ENCODE measurements at regions of chr9 and their contacts with region 1.

Region 1: GRCh38 chr9:93108291-93109041 is 12.4 kb downstream of the CARD19 start:
- DNase-seq: no peak
- H3K4me3 ChIP-seq: no peak overlapping the region
- H3K27ac ChIP-seq: no peak overlapping the region
- H3K27me3 ChIP-seq: no peaks in the 10 kb centered on the region
- CTCF ChIP-seq: no peak

Region 2: GRCh38 chr9:93003552-93004407 is 104.7 kb before region 1 on chr9:
- CTCF ChIA-PET with region 1: interaction called, 17 read pairs
- POLR2A ChIA-PET with region 1: no interaction called
- DNase-seq: peak; percentile 1
- H3K4me3 ChIP-seq: no peak overlapping the region
- H3K27ac ChIP-seq: no peak overlapping the region
- H3K27me3 ChIP-seq: no peaks in the 10 kb centered on the region
- CTCF ChIP-seq: peak; percentile 69

Region 3: GRCh38 chr9:93098236-93098946 is 10.1 kb before region 1 on chr9:
- CTCF ChIA-PET with region 1: interaction called, 21 read pairs
- POLR2A ChIA-PET with region 1: no interaction called
- DNase-seq: peak; percentile 91
- H3K4me3 ChIP-seq: peak overlapping the region; percentile 83
- H3K27ac ChIP-seq: peak overlapping the region; percentile 94
- H3K27me3 ChIP-seq: no peaks in the 10 kb centered on the region
- CTCF ChIP-seq: no peak

Region 4: GRCh38 chr9:93119953-93120845 is 11.7 kb after region 1 on chr9:
- CTCF ChIA-PET with region 1: interaction called, 53 read pairs
- POLR2A ChIA-PET with region 1: no interaction called
- DNase-seq: peak; percentile 85
- H3K4me3 ChIP-seq: no peak overlapping the region
- H3K27ac ChIP-seq: peak overlapping the region; percentile 42
- H3K27me3 ChIP-seq: no peaks in the 10 kb centered on the region
- CTCF ChIP-seq: peak; percentile 56

Region 5: GRCh38 chr9:93134015-93134739 is 25.7 kb after region 1 on chr9 and contains the start of gene NINJ1:
- CTCF ChIA-PET with region 1: interaction called, 11 read pairs
- POLR2A ChIA-PET with region 1: no interaction called
- DNase-seq: no peak
- H3K4me3 ChIP-seq: peak within 1 kb of the TSS; percentile 77
- H3K27ac ChIP-seq: peak within 1 kb of the TSS; percentile 96
- H3K27me3 ChIP-seq: no peaks in the 10 kb centered on the region
- CTCF ChIP-seq: no peak
- polyA plus RNA-seq, gene NINJ1: 26.8 and 47.4 TPM in 2 replicates

Region 6: GRCh38 chr9:93302551-93303257 is 194.2 kb after region 1 on chr9:
- CTCF ChIA-PET with region 1: interaction called, 22 read pairs
- POLR2A ChIA-PET with region 1: no interaction called
- DNase-seq: no peak
- H3K4me3 ChIP-seq: no peak overlapping the region
- H3K27ac ChIP-seq: no peak overlapping the region
- H3K27me3 ChIP-seq: peaks cover 7% of the 10 kb centered on the region
- CTCF ChIP-seq: peak; percentile 73

Region 7: DNA sequence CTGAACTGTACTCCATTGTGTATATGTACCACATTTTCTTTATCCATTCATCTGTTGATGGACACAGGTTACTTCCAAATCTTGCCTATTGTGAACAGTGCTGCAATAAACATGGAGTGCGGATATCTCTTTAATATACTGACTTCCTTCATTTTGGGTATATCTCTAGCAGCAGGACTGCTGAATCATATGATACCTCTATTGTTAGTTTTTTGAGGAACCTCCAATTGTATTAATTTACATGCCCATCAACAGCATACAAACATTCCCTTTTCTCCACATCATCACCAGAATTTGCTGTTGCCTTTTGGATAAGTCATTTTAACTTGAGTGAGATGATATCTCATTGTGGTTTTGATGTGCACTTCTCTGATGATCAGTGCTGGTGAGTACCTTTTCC is 261.2 kb after region 1 on chr9:
- CTCF ChIA-PET with region 1: no interaction called
- POLR2A ChIA-PET with region 1: no interaction called
- DNase-seq: no peak
- H3K4me3 ChIP-seq: no peak overlapping the region
- H3K27ac ChIP-seq: no peak overlapping the region
- H3K27me3 ChIP-seq: no peaks in the 10 kb centered on the region
- CTCF ChIP-seq: no peak

Measured in AG04450 (cell line).